ENCODE measurements at regions of chr2 and their contacts with region 1.

Region 1: GRCh38 chr2:97663965-97664635 is at the start of gene ACTR1B:
- DNase-seq: peak; percentile 95 to 97
- H3K4me3 ChIP-seq: peak within 1 kb of the TSS; percentile 76 to 82 (median 79)
- H3K27ac ChIP-seq: peak within 1 kb of the TSS; percentile 87
- H3K4me1 ChIP-seq: peaks cover 0 to 9% (median 7%) of the 10 kb centered on the region in 4 experiments; a peak in 4 of 7 replicates
- H3K27me3 ChIP-seq: no peaks in the 10 kb centered on the region
- CTCF ChIP-seq: peak in 1 of 3 experiments; percentile 35; a peak in 1 of 4 replicates
- EP300 ChIP-seq: no peak
- POLR2A ChIP-seq: peak in 1 of 2 experiments; percentile 89; a peak in 2 of 3 replicates
- RAD21 ChIP-seq: peak; percentile 34 to 42
- total RNA-seq, gene ACTR1B: 40.7 and 43.8 TPM in 2 replicates

Region 2: DNA sequence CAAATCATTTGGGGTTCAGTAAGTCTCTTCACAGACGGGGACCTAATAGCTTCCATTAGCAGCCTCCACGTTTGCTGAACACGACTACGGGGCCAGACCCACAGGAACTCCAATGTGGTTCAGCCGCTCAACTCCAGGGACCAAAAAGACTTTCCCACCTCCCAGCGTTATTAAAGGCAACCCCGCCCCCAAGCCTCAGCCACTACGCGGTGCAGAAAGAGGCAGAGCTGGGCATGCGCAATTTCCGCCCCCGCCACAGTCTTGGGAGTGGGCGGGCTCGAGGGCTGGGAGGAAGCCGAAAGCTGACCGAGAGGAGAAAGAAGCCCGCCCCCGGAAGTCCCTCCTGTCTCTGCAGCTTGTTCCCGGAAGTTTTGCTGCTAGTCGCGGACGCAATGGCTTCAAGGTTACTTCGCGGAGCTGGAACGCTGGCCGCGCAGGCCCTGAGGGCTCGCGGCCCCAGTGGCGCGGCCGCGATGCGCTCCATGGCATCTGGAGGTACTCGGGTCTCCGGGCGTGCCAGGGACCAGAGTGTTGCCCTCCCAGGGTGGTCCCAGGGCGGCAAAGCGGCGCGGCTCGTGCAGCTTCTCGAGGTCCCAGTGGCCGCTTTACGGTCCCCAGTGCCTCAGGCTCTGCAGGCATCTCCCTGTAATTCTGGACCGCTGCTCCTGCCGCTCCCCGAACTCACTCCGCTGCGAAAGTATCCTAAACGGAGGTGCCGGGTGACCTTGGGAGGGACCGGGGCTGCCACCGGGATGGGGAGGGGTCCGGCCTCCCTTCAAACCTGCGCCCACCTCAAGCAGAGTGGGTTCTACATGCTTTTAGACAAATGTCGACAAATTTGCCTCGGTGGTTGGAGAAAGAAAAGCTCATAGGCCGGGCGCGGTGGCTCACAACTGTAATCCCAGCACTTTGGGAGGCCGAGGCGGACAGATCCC is 18.1 kb before region 1 on chr2 and contains the start of gene COX5B:
- CTCF ChIA-PET with region 1: interaction called, 59 read pairs
- POLR2A ChIA-PET with region 1: interaction called, 102 read pairs
- DNase-seq: peak; percentile 90 to 95
- H3K4me3 ChIP-seq: peak within 1 kb of the TSS; percentile 95 to 100 (median 96)
- H3K27ac ChIP-seq: peak within 1 kb of the TSS; percentile 72
- H3K4me1 ChIP-seq: peaks cover 0 to 6% (median 0%) of the 10 kb centered on the region in 4 experiments; a peak in 2 of 7 replicates
- H3K27me3 ChIP-seq: no peaks in the 10 kb centered on the region; a peak in 1 of 7 replicates
- CTCF ChIP-seq: no peak
- EP300 ChIP-seq: no peak
- POLR2A ChIP-seq: peak; percentile 76 to 79
- RAD21 ChIP-seq: no peak
- total RNA-seq, gene COX5B: 233 and 247 TPM in 2 replicates

Region 3: DNA sequence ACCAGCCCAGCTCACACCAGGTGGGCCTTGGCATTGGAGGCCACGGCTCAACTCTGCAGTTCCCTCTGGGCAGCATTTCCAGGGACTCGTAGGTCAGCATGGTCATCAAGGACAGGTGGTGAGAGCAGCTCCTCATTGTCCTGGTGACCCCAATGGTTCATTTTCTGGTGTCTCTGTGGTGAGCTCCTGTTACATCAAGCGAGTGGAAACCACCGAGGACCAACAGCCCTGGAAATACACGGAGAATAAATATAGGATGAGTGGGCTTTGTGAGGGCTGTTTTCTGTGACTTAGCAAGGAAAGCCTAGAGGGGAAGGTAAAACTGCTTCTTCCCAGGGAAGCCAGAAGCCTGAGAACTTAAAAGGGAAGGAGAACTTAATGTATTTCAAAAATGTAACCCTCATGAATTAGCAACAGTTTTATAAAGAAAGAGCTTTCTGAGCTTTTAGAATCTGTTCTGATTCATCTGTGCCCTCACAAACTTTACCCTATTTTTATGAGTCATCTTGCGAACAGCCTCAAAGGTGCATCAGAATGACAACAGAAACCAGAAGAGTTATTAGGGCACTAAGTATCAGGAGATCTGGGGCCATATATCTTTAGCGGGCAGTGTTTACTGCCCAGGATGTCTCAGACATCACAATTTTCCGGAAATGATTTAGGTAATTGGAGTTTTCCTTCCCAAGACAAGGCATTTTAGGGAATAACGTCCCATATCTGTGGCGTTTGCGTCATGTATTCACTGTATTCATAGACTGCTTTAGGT is 24.1 kb after region 1 on chr2:
- CTCF ChIA-PET with region 1: interaction called, 9 read pairs
- POLR2A ChIA-PET with region 1: interaction called, 11 read pairs
- DNase-seq: no peak
- H3K4me3 ChIP-seq: no peak overlapping the region
- H3K27ac ChIP-seq: no peak overlapping the region
- H3K4me1 ChIP-seq: peaks cover 0 to 10% (median 4%) of the 10 kb centered on the region in 4 experiments; a peak in 4 of 7 replicates
- H3K27me3 ChIP-seq: no peaks in the 10 kb centered on the region
- CTCF ChIP-seq: no peak
- EP300 ChIP-seq: no peak
- POLR2A ChIP-seq: no peak
- RAD21 ChIP-seq: no peak